Activated T-helper 2 cell treated with anti-CD3 and anti-CD28 coated beads, Interferon-gamma antibody, Interleukin-2, Interleukin-4, amounts not matched to agents 10 μg/mL and 5 μg/mL and 100 μg/mL, durations not matched to agents 14 hours and 24 hours and 36 hours (primary cell): ENCODE measurements at regions of chr1 and their contacts with region 1.

Region 1: DNA sequence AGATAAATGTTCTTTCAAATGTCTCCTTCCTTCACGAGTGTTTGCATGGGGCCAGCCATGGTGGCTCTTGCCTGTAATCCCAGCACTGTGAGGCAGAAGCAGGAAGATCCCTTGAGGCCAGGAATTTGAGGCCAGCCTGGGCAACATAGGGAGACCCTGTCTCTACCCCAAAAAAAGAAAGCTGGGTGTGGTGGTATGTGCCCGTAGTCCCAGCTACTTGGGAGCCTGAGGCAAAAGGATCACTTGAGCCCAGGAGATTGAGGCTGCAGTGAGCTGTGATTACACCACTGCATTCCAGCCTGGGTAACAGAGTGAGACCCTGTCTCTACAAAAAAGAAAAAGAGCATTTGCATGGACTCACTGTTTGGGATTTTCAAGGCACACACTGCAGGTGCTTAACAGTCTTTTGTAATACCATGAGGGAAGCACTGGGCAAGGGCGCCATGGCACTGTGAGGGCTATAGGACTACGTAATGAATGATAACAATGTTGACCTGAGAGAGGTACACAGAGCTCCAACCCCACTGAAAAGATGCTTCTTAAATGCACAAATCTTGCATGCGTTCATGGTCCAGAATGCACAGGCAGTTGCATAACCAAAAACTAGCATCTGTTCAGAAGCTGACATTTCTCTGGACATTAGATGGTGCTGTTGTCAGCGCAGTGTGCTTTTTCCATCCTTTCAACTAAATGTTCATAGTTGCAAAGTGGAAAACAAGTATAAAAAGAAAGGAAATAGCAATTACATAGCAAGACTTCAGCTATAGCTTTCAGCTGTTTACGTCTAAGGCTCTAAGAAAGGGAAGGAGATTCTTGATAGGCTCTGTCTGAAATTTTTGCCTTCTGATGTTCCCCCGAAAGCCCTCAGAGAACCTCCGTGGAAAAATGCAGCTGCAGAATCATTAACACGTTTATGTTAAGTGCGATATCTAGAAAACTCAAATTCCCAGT is 7.8 kb upstream of the TARBP1 start:
- DNase-seq: no peak
- H3K4me3 Mint-ChIP-seq: peak overlapping the region; percentile 28
- H3K27ac Mint-ChIP-seq: peak overlapping the region; percentile 94
- H3K4me1 Mint-ChIP-seq: peaks cover 42% of the 10 kb centered on the region
- H3K27me3 Mint-ChIP-seq: peaks cover 16% of the 10 kb centered on the region

Region 2: DNA sequence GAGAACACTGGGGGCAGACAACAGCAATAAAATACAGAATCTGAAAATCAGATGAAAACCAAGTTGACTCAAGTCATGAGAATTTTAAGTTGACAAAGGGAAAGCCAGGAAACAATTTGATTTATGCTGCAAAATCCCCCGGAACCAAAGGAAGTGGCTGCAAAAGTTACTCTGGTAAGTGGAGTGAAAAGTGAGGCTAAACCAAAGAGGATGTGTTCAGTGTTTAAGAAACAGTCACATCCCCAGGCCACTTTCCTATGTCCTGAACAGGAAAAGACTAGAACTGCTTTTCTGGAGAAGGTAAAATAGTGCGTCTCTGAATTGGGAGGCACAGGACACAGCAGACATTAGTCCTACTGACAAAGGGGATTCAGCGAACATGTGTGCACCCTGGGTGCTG is 13.7 kb before region 1 on chr1:
- intact Hi-C with region 1: no loop called
- DNase-seq: no peak
- H3K4me3 Mint-ChIP-seq: no peak overlapping the region
- H3K27ac Mint-ChIP-seq: peak overlapping the region; percentile 64
- H3K4me1 Mint-ChIP-seq: peaks cover 41% of the 10 kb centered on the region
- H3K27me3 Mint-ChIP-seq: no peaks in the 10 kb centered on the region

Region 3: GRCh38 chr1:234716908-234717375 is 230.2 kb after region 1 on chr1:
- intact Hi-C with region 1: no loop called
- DNase-seq: no peak
- H3K4me3 Mint-ChIP-seq: no peak overlapping the region
- H3K27ac Mint-ChIP-seq: no peak overlapping the region
- H3K4me1 Mint-ChIP-seq: peaks cover 17% of the 10 kb centered on the region
- H3K27me3 Mint-ChIP-seq: no peaks in the 10 kb centered on the region

Region 4: GRCh38 chr1:234730770-234731568 is 244.2 kb after region 1 on chr1:
- intact Hi-C with region 1: loop called (anchors 1 kb)
- DNase-seq: peak; percentile 36
- H3K4me3 Mint-ChIP-seq: no peak overlapping the region
- H3K27ac Mint-ChIP-seq: peak overlapping the region; percentile 97
- H3K4me1 Mint-ChIP-seq: peaks cover 74% of the 10 kb centered on the region
- H3K27me3 Mint-ChIP-seq: no peaks in the 10 kb centered on the region

Region 5: DNA sequence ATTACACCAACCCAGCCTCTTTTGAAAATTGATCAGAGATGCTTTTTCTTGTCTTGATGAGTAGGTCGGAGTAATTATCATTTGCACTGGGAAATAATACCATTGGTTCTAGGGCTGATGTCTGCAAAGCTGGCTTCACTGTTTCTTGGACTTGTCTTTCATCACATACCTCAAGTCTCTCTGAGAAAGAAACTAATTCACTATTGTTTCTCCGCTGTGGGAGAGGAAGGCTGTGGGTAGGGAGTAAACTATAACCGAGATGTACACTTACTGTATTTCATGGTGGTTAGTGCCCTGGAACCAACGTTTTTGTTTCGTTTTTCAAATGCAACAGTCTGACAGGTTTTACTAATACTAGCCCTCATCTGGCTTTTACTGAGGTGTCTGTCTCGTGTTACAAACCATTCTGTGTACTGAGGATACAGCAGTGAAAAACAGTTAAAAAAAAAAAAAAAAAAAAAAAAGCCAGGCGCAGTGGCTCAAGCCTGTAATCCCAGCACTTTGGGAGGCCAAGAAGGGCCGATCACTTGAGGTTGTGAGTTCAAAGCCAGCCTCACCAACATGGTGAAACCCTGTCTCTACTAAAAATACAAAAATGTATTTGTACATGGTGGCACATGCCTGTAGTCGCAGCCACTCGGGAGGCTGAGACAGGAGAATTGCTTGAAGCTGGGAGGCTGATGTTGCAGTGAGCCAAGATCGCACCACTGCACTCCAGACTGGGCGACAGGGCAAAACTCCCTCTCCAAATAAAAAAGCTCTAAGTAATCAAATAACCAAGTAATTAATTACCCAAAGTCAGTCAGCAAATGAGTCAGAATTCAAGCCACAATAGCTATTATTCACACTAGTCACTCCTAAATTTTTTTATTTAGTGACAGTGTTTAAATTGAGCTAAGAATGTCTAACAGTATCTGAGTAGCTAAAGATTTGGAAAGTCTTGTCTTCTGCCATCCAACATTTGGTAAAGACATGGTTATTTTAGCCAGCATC is 618.6 kb after region 1 on chr1:
- intact Hi-C with region 1: loop called (anchors 1 kb)
- DNase-seq: no peak
- H3K4me3 Mint-ChIP-seq: peak overlapping the region; percentile 38
- H3K27ac Mint-ChIP-seq: peak overlapping the region; percentile 85
- H3K4me1 Mint-ChIP-seq: peaks cover 28% of the 10 kb centered on the region
- H3K27me3 Mint-ChIP-seq: no peaks in the 10 kb centered on the region

Region 6: GRCh38 chr1:235415008-235415904 is 928.5 kb after region 1 on chr1:
- intact Hi-C with region 1: loop called (anchors 5 kb)
- DNase-seq: peak; percentile 38
- H3K4me3 Mint-ChIP-seq: no peak overlapping the region
- H3K27ac Mint-ChIP-seq: no peak overlapping the region
- H3K4me1 Mint-ChIP-seq: peaks cover 6% of the 10 kb centered on the region
- H3K27me3 Mint-ChIP-seq: no peaks in the 10 kb centered on the region

Region 7: GRCh38 chr1:235878082-235878811 is 1391.5 kb after region 1 on chr1:
- intact Hi-C with region 1: loop called (anchors 10 kb)
- DNase-seq: no peak
- H3K4me3 Mint-ChIP-seq: no peak overlapping the region
- H3K27ac Mint-ChIP-seq: peak overlapping the region; percentile 54
- H3K4me1 Mint-ChIP-seq: peaks cover 63% of the 10 kb centered on the region
- H3K27me3 Mint-ChIP-seq: no peaks in the 10 kb centered on the region